ENCODE measurements at regions of chr10 and their contacts with region 1.

Region 1: DNA sequence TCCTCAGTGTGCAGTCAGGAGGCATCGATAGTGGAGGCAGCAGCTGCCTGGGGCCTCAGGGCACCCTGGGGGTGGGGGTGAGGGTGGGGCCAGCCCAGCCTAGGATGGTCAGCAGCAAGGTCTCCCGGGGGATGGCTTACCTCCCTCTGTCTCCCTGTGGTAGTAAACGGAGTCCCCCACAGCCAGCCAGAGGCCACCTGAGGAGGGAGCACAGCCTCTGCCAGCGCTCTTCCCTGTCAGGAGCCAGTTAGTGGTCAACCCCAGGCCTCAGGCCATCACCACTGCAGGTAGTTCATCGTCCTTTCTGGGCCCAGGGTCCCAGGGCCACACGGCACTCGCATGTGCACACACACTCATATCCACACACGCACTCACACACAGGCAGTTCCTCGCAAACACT is 22.1 kb downstream of the ACTR1A start:
- DNase-seq: no peak
- H3K4me3 ChIP-seq: no peak overlapping the region
- H3K27ac ChIP-seq: no peak overlapping the region
- H3K4me1 ChIP-seq: peaks cover 0 to 2% (median 0%) of the 10 kb centered on the region in 4 experiments
- H3K27me3 ChIP-seq: no peaks in the 10 kb centered on the region

Region 2: GRCh38 chr10:102358712-102359382 is 121.5 kb before region 1 on chr10:
- CTCF ChIA-PET with region 1: no interaction called
- POLR2A ChIA-PET with region 1: no interaction called
- DNase-seq: no peak
- H3K4me3 ChIP-seq: no peak overlapping the region
- H3K27ac ChIP-seq: no peak overlapping the region
- H3K4me1 ChIP-seq: no peaks in the 10 kb centered on the region
- H3K27me3 ChIP-seq: no peaks in the 10 kb centered on the region

Region 3: DNA sequence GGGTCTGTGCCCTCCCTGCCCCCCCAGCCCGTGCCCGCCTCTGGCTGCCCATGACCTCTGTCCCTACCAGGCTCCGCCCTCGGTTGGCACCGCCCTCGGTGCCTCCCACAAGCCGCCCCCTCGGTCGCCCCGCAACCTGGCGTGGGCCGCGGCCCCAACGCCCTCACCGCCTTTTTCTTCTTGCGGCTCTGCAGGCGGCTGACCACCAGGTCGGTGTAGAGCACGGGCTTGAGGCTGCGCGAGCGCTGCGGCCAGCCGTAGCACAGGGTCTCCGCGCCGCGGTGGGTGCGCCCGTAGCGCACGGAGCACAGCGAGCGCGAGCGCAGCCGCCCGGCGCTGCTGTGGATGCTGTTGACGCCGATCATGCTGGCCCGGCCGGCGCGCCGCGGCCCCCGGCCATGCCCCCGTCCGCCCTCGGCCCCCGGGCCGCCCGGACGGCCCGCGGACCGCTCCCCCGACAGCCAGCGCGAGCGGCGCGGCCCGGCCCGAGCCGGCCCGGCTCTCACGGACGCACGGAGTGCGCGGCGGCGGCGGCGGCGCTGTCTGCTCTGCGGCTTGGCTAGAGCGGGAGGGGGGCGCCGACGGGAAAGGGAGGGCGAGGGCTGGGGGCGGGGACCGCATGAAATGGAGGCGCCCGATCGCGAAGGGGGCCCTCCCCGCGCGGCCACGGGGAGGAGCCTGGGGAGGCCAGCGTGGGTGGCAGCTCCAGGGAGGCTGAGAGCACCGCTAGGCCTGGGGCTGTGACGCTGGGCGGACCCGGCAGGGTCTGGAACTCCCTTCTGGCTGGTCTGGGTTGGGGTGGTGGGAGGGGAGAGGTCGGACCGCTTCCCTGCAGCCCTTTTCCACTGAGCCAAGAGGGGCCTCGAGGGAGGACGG is 71.4 kb before region 1 on chr10:
- CTCF ChIA-PET with region 1: interaction called, 12 read pairs
- POLR2A ChIA-PET with region 1: interaction called, 4 read pairs
- DNase-seq: peak in 2 of 3 donors; percentile 76 to 83
- H3K4me3 ChIP-seq: peak overlapping the region; percentile 30 to 77 (median 65)
- H3K27ac ChIP-seq: no peak overlapping the region
- H3K4me1 ChIP-seq: peaks cover 0 to 30% (median 22%) of the 10 kb centered on the region in 4 experiments
- H3K27me3 ChIP-seq: peaks cover 0 to 40% (median 28%) of the 10 kb centered on the region in 5 experiments

Region 4: GRCh38 chr10:102450194-102450938 is 30.0 kb before region 1 on chr10:
- CTCF ChIA-PET with region 1: interaction called, 14 read pairs
- POLR2A ChIA-PET with region 1: interaction called, 4 read pairs
- DNase-seq: peak; percentile 88 to 94 (median 92)
- H3K4me3 ChIP-seq: peak overlapping the region; percentile 75 to 98 (median 87)
- H3K27ac ChIP-seq: peak overlapping the region; percentile 61 to 83
- H3K4me1 ChIP-seq: peaks cover 6 to 33% (median 21%) of the 10 kb centered on the region in 4 experiments
- H3K27me3 ChIP-seq: no peaks in the 10 kb centered on the region

Region 5: DNA sequence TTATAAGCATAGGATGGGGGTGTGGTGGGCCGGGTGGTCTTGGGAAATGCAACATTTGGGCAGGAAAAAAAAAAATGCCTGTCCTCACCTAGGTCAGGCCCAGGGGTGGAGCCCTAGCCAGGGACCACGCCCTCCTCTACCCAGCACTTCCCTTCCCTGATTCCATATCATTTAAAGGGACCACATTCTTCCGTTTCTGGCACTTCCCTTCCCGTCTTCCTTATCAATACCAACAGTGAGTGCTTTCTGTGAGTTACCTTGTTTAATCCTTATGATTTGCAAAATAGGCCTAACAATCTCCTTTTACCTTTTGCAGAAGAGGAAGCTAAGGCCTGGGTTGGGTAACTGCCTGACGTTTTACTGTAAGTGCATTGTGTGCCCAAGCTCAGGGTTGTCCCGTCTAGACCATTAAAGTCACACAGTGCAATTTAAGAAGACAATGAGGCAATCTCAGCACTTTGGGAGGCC is 12.4 kb before region 1 on chr10:
- CTCF ChIA-PET with region 1: interaction called, 13 read pairs
- POLR2A ChIA-PET with region 1: no interaction called
- DNase-seq: peak in 2 of 3 donors; percentile 21 to 27
- H3K4me3 ChIP-seq: no peak overlapping the region
- H3K27ac ChIP-seq: peak overlapping the region in 1 of 2 experiments; percentile 38
- H3K4me1 ChIP-seq: peaks cover 0 to 1% (median 0%) of the 10 kb centered on the region in 4 experiments
- H3K27me3 ChIP-seq: peaks cover 0 to 9% (median 0%) of the 10 kb centered on the region in 5 experiments

Region 6: DNA sequence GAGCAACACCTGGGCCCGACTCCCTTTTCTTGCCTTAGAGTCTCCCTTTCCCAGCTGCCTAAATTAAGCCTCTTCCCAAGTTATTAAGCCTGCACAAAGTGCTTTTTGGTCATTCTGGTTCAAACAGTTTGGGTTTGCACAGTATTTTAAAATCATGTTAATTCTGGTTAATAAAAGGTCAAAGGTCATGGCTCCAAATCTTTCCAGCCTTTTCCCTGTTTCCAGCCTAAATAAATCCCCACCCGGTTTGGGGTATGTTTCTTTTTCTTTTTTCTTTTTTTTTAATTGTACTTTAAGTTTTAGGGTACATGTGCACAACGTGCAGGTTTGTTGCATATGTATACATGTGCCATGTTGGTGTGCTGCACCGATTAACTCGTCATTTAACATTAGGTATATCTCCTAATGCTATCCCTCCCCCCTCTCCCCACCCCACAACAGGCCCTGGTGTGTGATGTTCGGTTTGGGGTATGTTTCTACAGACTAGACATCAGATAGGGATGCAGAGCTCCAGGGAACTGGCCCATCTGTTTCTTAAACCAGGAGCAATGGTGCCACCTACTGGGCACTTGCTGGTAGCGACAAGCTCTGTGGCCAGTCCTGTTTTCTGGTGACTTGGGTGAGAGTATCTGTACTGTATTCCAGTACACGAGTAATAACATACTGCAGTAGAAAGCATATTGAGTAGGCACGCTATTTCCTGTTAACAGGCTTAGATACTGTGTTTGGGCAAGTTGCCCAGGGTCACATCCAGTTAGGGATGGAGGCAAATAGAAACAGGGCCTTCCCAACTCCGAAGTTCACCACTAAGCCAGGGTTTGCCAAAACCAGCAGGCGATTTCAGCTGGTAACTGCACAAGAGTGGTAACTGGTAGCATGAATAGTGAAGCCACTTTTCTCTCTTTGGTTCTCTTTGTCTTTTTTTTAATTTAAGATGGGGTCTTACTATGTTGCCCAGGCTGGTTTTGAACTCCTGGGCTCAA is 103.3 kb after region 1 on chr10:
- CTCF ChIA-PET with region 1: interaction called, 32 read pairs
- POLR2A ChIA-PET with region 1: no interaction called
- DNase-seq: peak; percentile 87 to 94 (median 90)
- H3K4me3 ChIP-seq: no peak overlapping the region
- H3K27ac ChIP-seq: peak overlapping the region in 1 of 2 experiments; percentile 11
- H3K4me1 ChIP-seq: peaks cover 3 to 20% (median 14%) of the 10 kb centered on the region in 4 experiments
- H3K27me3 ChIP-seq: no peaks in the 10 kb centered on the region

Measured in common myeloid progenitor, CD34-positive (primary cell).